CD4-positive, alpha-beta memory T cell (primary cell): ENCODE measurements at regions of chr19 and their contacts with region 1.

Region 1: DNA sequence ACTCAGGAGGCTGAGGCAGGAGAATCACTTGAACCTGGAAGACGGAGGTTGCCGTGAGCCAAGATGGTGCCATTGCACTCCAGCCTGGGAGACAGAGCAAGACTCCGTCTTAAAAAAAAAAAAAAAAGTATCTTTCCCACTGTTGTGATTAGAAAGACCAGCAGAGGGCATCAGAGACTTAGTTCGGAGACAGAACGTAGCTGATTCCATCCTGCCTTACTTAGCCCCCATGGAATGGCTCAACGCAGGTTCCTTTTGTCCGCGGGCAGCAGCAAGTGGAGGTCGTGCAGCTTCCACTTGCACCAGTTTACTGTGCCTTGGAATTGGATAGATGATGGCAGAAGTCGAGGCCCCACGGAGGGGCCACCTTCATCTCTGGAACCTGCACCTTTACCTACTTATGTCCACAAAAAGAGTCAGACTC is 8.1 kb downstream of the TIMM29 start:
- DNase-seq: peak in 4 of 5 donors; percentile 53 to 63 (median 59)
- H3K4me3 ChIP-seq: no peak overlapping the region
- H3K4me3 Mint-ChIP-seq: peak overlapping the region in 1 of 8 donors; percentile 36
- H3K27ac ChIP-seq: no peak overlapping the region
- H3K27ac Mint-ChIP-seq: peak overlapping the region in 3 of 7 donors; percentile 48 to 82 (median 60)
- H3K4me1 ChIP-seq: peaks cover 10% of the 10 kb centered on the region
- H3K4me1 Mint-ChIP-seq: peaks cover 5 to 10% (median 8%) of the 10 kb centered on the region in 4 donors
- H3K27me3 ChIP-seq: no peaks in the 10 kb centered on the region
- H3K27me3 Mint-ChIP-seq: no peaks in the 10 kb centered on the region

Region 2: GRCh38 chr19:10952809-10953208 is 16.1 kb after region 1 on chr19:
- CTCF ChIA-PET with region 1: interaction called, 10 read pairs
- POLR2A ChIA-PET with region 1: interaction called, 3 read pairs
- intact Hi-C with region 1: no loop called
- DNase-seq: no peak
- H3K4me3 ChIP-seq: no peak overlapping the region
- H3K4me3 Mint-ChIP-seq: no peak overlapping the region
- H3K27ac ChIP-seq: no peak overlapping the region
- H3K27ac Mint-ChIP-seq: no peak overlapping the region
- H3K4me1 ChIP-seq: no peaks in the 10 kb centered on the region
- H3K4me1 Mint-ChIP-seq: no peaks in the 10 kb centered on the region
- H3K27me3 ChIP-seq: no peaks in the 10 kb centered on the region
- H3K27me3 Mint-ChIP-seq: no peaks in the 10 kb centered on the region

Region 3: DNA sequence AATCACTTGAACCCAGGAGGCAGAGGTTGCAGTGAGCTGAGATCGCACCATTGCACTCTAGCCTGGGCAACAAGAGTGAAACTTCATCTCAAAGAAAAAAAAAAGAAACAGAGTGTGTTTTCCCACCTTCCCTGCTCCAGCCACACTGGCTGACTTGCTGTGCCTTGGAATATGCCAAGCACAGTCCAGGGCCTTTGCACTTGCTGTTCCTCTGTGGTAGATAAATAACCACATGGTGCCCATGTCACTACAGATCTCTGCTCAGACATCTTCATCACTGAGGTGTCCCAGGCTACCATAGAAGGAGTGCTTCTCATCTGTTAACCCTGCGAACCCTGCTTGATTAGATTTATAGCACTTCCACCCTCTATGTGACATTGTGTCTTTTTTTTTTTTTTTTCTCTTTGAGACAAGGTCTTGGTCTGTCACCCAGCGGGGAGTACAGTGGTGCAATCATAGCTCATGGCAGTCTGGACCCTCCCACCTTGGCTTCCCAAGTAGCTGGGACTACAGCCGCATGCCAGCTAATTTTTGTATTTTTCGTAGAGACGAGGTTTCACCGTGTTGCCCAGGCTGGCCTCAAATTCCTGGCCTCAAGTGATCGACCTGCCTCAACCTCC is 34.5 kb after region 1 on chr19:
- CTCF ChIA-PET with region 1: interaction called, 20 read pairs
- POLR2A ChIA-PET with region 1: no interaction called
- intact Hi-C with region 1: no loop called
- DNase-seq: no peak
- H3K4me3 ChIP-seq: no peak overlapping the region
- H3K4me3 Mint-ChIP-seq: no peak overlapping the region
- H3K27ac ChIP-seq: no peak overlapping the region
- H3K27ac Mint-ChIP-seq: peak overlapping the region in 2 of 7 donors; percentile 22 to 53
- H3K4me1 ChIP-seq: peaks cover 13% of the 10 kb centered on the region
- H3K4me1 Mint-ChIP-seq: peaks cover 26 to 55% (median 40%) of the 10 kb centered on the region in 4 donors
- H3K27me3 ChIP-seq: no peaks in the 10 kb centered on the region
- H3K27me3 Mint-ChIP-seq: no peaks in the 10 kb centered on the region

Region 4: GRCh38 chr19:10979951-10980381 is 43.3 kb after region 1 on chr19:
- CTCF ChIA-PET with region 1: interaction called, 12 read pairs
- POLR2A ChIA-PET with region 1: interaction called, 4 read pairs
- intact Hi-C with region 1: no loop called
- DNase-seq: peak in 2 of 5 donors; percentile 6 to 19
- H3K4me3 ChIP-seq: no peak overlapping the region
- H3K4me3 Mint-ChIP-seq: peak overlapping the region in 6 of 8 donors; percentile 29 to 60 (median 50)
- H3K27ac ChIP-seq: no peak overlapping the region
- H3K27ac Mint-ChIP-seq: peak overlapping the region in 6 of 7 donors; percentile 36 to 76 (median 70)
- H3K4me1 ChIP-seq: no peaks in the 10 kb centered on the region
- H3K4me1 Mint-ChIP-seq: peaks cover 14 to 27% (median 21%) of the 10 kb centered on the region in 4 donors
- H3K27me3 ChIP-seq: no peaks in the 10 kb centered on the region
- H3K27me3 Mint-ChIP-seq: no peaks in the 10 kb centered on the region

Region 5: GRCh38 chr19:11005521-11005920 is 68.8 kb after region 1 on chr19:
- CTCF ChIA-PET with region 1: interaction called, 11 read pairs
- POLR2A ChIA-PET with region 1: no interaction called
- intact Hi-C with region 1: no loop called
- DNase-seq: no peak
- H3K4me3 ChIP-seq: no peak overlapping the region
- H3K4me3 Mint-ChIP-seq: no peak overlapping the region
- H3K27ac ChIP-seq: no peak overlapping the region
- H3K27ac Mint-ChIP-seq: peak overlapping the region in 5 of 7 donors; percentile 22 to 57 (median 38)
- H3K4me1 ChIP-seq: no peaks in the 10 kb centered on the region
- H3K4me1 Mint-ChIP-seq: no peaks in the 10 kb centered on the region
- H3K27me3 ChIP-seq: no peaks in the 10 kb centered on the region
- H3K27me3 Mint-ChIP-seq: no peaks in the 10 kb centered on the region

Region 6: GRCh38 chr19:11050323-11051114 is 113.8 kb after region 1 on chr19:
- CTCF ChIA-PET with region 1: no interaction called
- POLR2A ChIA-PET with region 1: no interaction called
- intact Hi-C with region 1: no loop called
- DNase-seq: no peak
- H3K4me3 ChIP-seq: no peak overlapping the region
- H3K4me3 Mint-ChIP-seq: peak overlapping the region in 2 of 8 donors; percentile 56 to 80
- H3K27ac ChIP-seq: peak overlapping the region; percentile 52
- H3K27ac Mint-ChIP-seq: peak overlapping the region; percentile 80 to 96 (median 94)
- H3K4me1 ChIP-seq: peaks cover 59% of the 10 kb centered on the region
- H3K4me1 Mint-ChIP-seq: peaks cover 22 to 60% (median 44%) of the 10 kb centered on the region in 4 donors
- H3K27me3 ChIP-seq: no peaks in the 10 kb centered on the region
- H3K27me3 Mint-ChIP-seq: no peaks in the 10 kb centered on the region

Region 7: GRCh38 chr19:11203194-11204075 is 266.8 kb after region 1 on chr19:
- CTCF ChIA-PET with region 1: interaction called, 9 read pairs
- POLR2A ChIA-PET with region 1: no interaction called
- intact Hi-C with region 1: loop called (anchors 2 kb)
- DNase-seq: peak in 1 of 5 donors; percentile 18
- H3K4me3 ChIP-seq: no peak overlapping the region
- H3K4me3 Mint-ChIP-seq: no peak overlapping the region
- H3K27ac ChIP-seq: no peak overlapping the region
- H3K27ac Mint-ChIP-seq: no peak overlapping the region
- H3K4me1 ChIP-seq: no peaks in the 10 kb centered on the region
- H3K4me1 Mint-ChIP-seq: peaks cover 0 to 1% (median 0%) of the 10 kb centered on the region in 4 donors
- H3K27me3 ChIP-seq: no peaks in the 10 kb centered on the region
- H3K27me3 Mint-ChIP-seq: no peaks in the 10 kb centered on the region